ENCODE measurements at regions of chr4 and their contacts with region 1.

Region 1: DNA sequence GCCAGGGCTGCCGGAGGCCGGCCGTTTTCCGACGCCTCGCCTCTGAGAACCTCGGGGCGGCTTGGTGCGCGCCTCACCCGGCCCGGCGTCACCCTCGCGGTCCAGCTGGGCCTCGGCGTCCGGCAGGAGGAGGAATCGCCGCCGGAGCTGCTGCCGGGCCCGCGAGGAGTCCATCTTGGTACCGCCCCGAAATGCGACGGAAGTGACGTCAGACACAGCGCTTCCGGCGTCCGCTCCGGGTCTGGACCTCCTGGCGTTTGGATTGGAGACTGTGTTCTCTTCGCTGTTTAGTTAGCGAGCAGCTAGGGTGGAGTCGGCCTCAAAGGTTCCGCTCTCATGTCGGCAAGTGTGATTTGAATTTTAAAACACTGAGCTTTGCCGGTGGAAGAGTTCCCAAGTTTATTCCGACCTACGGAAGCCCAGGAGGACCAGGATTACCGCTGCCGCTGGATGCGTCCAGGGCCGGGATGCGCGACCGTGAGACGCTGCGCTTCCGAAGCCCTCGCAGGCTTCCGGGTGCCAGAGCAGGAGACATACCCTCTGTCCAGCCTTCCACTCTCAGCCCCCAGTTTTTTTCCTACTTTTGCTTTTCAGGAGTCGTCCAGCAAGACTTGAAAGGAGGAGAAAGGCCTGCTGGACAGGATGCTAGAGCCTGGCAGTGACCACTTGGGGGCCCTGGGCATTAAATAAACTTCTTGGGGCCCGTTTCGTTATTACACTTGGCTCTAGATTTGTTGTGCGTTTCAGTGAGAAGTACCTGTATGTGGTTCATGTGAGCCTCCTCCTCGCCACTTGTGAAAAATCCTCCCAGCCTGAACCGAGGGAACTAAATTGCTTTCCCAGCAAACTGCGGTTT is at the start of gene TMEM128:
- DNase-seq: peak; percentile 93
- H3K4me3 ChIP-seq: peak within 1 kb of the TSS; percentile 87 to 94 (median 88)
- H3K27ac ChIP-seq: peak within 1 kb of the TSS; percentile 99
- H3K4me1 ChIP-seq: peaks cover 14% of the 10 kb centered on the region
- H3K27me3 ChIP-seq: no peaks in the 10 kb centered on the region
- CTCF ChIP-seq: peak; percentile 16 to 34
- POLR2A ChIP-seq: peak; percentile 86
- total RNA-seq, gene TMEM128: 11.5 and 13.2 TPM in 2 replicates

Region 2: GRCh38 chr4:4289941-4290850 is 41.9 kb after region 1 on chr4 and contains the starts of genes LYAR and ZBTB49:
- CTCF ChIA-PET with region 1: interaction called, 7 read pairs
- POLR2A ChIA-PET with region 1: no interaction called
- dilution Hi-C with region 1: no loop called
- intact Hi-C with region 1: loop called (anchors 2 kb)
- DNase-seq: peak; percentile 94
- H3K4me3 ChIP-seq: peak within 1 kb of the TSS; percentile 81 to 94 (median 89)
- H3K27ac ChIP-seq: peak within 1 kb of the TSS; percentile 41
- H3K4me1 ChIP-seq: peaks cover 17% of the 10 kb centered on the region
- H3K27me3 ChIP-seq: no peaks in the 10 kb centered on the region
- CTCF ChIP-seq: no peak
- POLR2A ChIP-seq: peak; percentile 78
- total RNA-seq, gene LYAR: 24.6 and 27.9 TPM in 2 replicates
- total RNA-seq, gene ZBTB49: 4.6 and 5.8 TPM in 2 replicates

Region 3: DNA sequence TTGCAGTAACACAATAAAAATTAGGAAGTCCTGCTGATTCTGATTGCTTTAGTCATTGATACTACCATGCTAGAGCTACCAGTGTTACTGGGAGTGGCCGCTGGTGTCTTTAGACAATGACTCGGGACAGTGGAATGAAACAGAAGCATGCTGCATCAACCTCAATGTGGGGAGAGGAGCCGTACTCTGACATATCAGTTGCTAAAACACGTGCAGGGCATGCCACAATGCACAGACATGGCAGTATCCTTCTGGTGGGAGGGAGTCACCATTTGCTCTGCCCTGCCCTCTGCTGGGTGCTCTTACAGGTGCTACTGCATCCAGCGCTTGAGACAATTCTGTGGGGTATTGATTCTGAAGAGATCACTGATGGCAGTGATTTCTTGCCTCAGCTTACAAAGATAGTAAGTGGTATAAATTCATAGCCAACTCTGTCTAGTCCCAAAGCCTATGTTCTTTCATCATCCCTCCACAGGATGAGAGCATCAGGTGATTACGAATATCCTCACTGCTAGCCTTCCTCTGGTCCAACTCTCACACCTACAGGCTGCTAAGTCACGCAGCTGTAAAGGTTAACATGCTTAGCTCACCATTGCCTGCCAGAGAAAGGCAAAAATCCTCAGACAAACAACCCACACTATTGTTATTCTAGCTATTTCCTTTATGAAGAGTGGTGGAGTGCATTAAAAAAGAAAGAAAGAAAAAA is 182.4 kb after region 1 on chr4:
- CTCF ChIA-PET with region 1: interaction called, 9 read pairs
- POLR2A ChIA-PET with region 1: no interaction called
- dilution Hi-C with region 1: no loop called
- intact Hi-C with region 1: loop called (anchors 2 kb)
- DNase-seq: peak; percentile 50
- H3K4me3 ChIP-seq: no peak overlapping the region
- H3K27ac ChIP-seq: no peak overlapping the region
- H3K4me1 ChIP-seq: peaks cover 4% of the 10 kb centered on the region
- H3K27me3 ChIP-seq: no peaks in the 10 kb centered on the region
- CTCF ChIP-seq: peak; percentile 73 to 74
- POLR2A ChIP-seq: no peak

Measured in endothelial cell of umbilical vein (primary cell).